ENCODE measurements at regions of chr1 and their contacts with region 1.

Region 1: DNA sequence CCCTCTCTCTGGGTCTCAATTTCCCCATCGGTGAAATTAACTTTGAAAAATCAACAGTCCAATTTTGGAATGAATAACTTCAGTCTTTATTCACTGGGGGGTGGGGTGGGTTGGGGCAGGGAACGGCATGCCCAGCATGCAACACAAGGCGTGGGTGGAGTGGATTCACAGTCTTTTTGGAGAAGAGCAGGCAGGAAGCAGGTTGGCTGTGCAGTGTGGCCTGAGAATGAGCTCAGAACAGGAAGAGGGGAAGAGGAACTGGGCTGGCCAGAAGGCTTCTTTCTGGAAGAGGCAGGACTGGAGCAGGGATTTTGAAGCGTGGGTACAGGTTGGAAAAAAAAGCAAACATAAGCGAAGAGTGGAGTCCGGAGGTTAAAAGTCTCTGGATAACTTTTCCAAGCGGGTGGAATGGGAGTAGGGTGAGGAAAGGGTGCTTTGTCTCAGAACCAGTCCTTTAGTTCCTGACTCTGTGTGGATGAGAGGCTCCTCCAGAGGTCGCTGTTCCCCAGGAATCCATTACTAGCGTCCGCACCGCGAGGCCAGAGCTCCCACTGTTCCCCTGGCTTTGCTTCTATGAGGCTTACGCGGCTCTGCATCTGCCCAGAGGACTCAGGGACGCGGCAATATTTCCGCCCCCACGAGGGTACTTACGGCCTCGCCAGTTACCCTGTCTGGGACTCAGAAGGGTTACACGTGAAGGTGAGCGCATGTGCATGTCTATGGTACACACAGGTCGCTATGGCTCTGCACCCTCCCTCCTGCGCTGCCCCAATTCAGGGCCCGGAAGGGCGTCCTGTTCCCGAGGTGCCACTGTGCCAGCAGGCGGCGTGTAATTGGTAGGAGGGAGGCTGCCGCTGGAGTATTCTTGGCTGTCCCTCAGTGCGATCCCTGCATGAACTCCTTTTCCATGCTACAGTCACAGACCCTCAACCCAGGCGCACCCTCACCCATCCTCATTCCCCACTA is 5.5 kb upstream of the FOXD2 start:
- DNase-seq: peak; percentile 21 to 73 (median 62)
- ATAC-seq: peak; percentile 30
- H3K4me3 ChIP-seq: peak overlapping the region; percentile 9 to 34
- H3K4me3 Mint-ChIP-seq: peak overlapping the region; percentile 63
- H3K27ac ChIP-seq: no peak overlapping the region
- H3K27ac Mint-ChIP-seq: no peak overlapping the region
- H3K4me1 ChIP-seq: peaks cover 40% of the 10 kb centered on the region
- H3K4me1 Mint-ChIP-seq: peaks cover 40% of the 10 kb centered on the region
- H3K27me3 ChIP-seq: peaks cover 3 to 18% of the 10 kb centered on the region in 2 experiments
- H3K27me3 Mint-ChIP-seq: peaks cover 33% of the 10 kb centered on the region
- CTCF ChIP-seq: peak; percentile 49

Region 2: DNA sequence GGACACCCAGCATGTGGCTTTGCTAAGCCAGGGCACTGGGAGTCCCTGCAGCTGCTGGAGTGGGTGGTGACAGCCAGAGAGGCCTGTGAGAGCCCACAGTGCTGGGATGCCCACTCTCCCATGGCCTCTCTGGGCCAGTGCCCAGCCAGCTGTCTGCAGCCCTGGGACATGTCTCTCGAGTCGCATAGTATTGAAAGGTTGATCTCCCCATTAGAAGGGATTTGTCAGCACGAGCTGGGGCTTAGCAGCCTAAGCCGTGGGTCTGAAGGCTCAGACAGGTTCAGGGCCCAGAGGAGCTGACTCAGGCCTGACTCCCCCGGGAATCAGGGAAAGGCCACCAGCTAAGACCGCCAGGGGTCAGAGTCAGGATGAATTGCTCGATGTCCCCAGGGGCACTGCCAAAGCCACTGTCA is 59.0 kb after region 1 on chr1:
- CTCF ChIA-PET with region 1: no interaction called
- POLR2A ChIA-PET with region 1: no interaction called
- intact Hi-C with region 1: no loop called
- DNase-seq: no peak
- ATAC-seq: no peak
- H3K4me3 ChIP-seq: no peak overlapping the region
- H3K4me3 Mint-ChIP-seq: no peak overlapping the region
- H3K27ac ChIP-seq: no peak overlapping the region
- H3K27ac Mint-ChIP-seq: no peak overlapping the region
- H3K4me1 ChIP-seq: no peaks in the 10 kb centered on the region
- H3K4me1 Mint-ChIP-seq: no peaks in the 10 kb centered on the region
- H3K27me3 ChIP-seq: no peaks in the 10 kb centered on the region
- H3K27me3 Mint-ChIP-seq: peaks cover 19% of the 10 kb centered on the region
- CTCF ChIP-seq: no peak

Region 3: GRCh38 chr1:47624531-47624930 is 192.2 kb after region 1 on chr1:
- CTCF ChIA-PET with region 1: interaction called, 4 read pairs
- POLR2A ChIA-PET with region 1: no interaction called
- intact Hi-C with region 1: loop called (anchors 2 to 10 kb)
- DNase-seq: peak in 3 of 9 experiments; percentile 11 to 36 (median 28)
- ATAC-seq: no peak
- H3K4me3 ChIP-seq: no peak overlapping the region
- H3K4me3 Mint-ChIP-seq: no peak overlapping the region
- H3K27ac ChIP-seq: no peak overlapping the region
- H3K27ac Mint-ChIP-seq: no peak overlapping the region
- H3K4me1 ChIP-seq: no peaks in the 10 kb centered on the region
- H3K4me1 Mint-ChIP-seq: no peaks in the 10 kb centered on the region
- H3K27me3 ChIP-seq: no peaks in the 10 kb centered on the region
- H3K27me3 Mint-ChIP-seq: peaks cover 15% of the 10 kb centered on the region
- CTCF ChIP-seq: no peak

Measured in CD8-positive, alpha-beta T cell (primary cell).